ENCODE measurements at regions of chr1 and their contacts with region 1.

Region 1: GRCh38 chr1:8858888-8859706 is 19.4 kb downstream of the ENO1 start:
- DNase-seq: peak; percentile 45
- H3K4me3 ChIP-seq: no peak overlapping the region
- H3K27ac ChIP-seq: no peak overlapping the region
- H3K4me1 ChIP-seq: no peaks in the 10 kb centered on the region
- H3K27me3 ChIP-seq: no peaks in the 10 kb centered on the region
- CTCF ChIP-seq: peak; percentile 32 to 65 (median 60)
- POLR2A ChIP-seq: no peak

Region 2: GRCh38 chr1:8987881-8988617 is 129.0 kb after region 1 on chr1:
- intact Hi-C with region 1: loop called (anchors 2 kb)
- DNase-seq: peak; percentile 51
- H3K4me3 ChIP-seq: no peak overlapping the region
- H3K27ac ChIP-seq: peak overlapping the region; percentile 57 to 87
- H3K4me1 ChIP-seq: no peaks in the 10 kb centered on the region
- H3K27me3 ChIP-seq: no peaks in the 10 kb centered on the region
- CTCF ChIP-seq: peak; percentile 78 to 89 (median 88)
- POLR2A ChIP-seq: no peak

Measured in prostate gland (tissue), 2 donors.